ENCODE measurements at regions of chr2 and their contacts with region 1.

Region 1: DNA sequence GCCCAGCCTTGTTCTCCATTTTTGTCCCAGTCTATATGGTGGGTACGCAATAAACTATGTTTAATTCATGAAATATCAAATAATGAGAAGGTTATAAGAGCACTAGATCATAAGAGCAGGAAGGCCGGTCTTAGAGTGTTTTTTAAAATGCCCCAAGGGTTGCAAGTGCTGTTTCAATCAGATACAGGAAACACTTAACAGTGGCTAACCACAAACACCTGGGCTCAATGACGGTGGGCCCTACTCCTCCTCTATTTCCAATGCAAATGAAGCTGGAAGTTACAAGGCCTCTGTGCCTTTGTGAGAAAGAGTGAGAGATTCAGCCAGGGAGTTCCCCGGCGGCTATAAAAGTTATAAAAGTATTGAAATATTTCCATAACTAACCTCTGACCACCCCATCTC is 18.9 kb upstream of the WDR33 start:
- DNase-seq: peak; percentile 91
- H3K4me3 Mint-ChIP-seq: no peak overlapping the region
- H3K27ac Mint-ChIP-seq: peak overlapping the region; percentile 78
- H3K4me1 Mint-ChIP-seq: peaks cover 25% of the 10 kb centered on the region
- H3K27me3 Mint-ChIP-seq: no peaks in the 10 kb centered on the region

Region 2: DNA sequence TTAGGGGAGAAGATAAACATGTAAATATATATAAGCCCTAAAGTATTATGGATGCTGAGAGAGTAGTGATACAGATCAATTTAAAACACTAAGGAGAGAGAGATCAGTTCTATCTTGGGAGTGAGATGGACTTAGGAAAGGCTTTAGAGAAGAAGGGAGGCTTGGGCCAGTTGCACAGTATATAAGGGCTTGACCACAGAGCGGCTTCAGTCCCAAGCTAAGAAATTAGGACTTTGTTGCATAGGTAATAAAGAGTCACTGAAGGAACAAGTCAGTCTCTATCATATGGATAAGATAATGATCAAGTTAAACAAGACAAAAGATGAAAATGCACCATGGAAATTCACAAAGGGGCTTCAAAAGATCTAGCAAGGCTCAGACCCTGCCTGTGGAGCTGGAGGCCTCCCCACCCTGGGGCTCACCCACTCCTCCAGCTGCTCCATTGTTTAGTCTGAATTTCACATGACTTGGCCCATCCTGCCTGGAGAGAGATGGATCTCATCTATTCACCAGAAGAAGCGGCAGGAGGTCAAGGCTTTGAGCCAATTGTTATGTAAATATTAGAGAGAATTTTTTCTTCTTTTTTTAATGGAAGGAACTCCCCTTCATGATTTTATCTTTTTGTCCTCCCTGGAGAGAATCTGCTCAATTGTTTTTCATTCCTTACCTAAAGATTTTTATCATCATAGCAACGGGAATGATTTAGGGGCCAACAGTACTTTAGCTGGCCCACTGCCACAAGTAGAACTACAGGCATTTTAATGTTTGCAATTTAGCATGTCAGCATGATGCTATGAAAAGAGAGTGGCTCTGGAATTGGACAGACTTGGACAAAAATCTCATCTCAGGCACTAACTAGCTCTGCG is 1129.9 kb before region 1 on chr2:
- CTCF ChIA-PET with region 1: no interaction called
- intact Hi-C with region 1: loop called (anchors 10 kb)
- DNase-seq: no peak
- H3K4me3 Mint-ChIP-seq: no peak overlapping the region
- H3K27ac Mint-ChIP-seq: no peak overlapping the region
- H3K4me1 Mint-ChIP-seq: no peaks in the 10 kb centered on the region
- H3K27me3 Mint-ChIP-seq: no peaks in the 10 kb centered on the region

Region 3: GRCh38 chr2:127197475-127198385 is 632.1 kb before region 1 on chr2:
- CTCF ChIA-PET with region 1: no interaction called
- intact Hi-C with region 1: no loop called
- DNase-seq: peak; percentile 80
- H3K4me3 Mint-ChIP-seq: peak overlapping the region; percentile 69
- H3K27ac Mint-ChIP-seq: no peak overlapping the region
- H3K4me1 Mint-ChIP-seq: peaks cover 5% of the 10 kb centered on the region
- H3K27me3 Mint-ChIP-seq: no peaks in the 10 kb centered on the region

Region 4: DNA sequence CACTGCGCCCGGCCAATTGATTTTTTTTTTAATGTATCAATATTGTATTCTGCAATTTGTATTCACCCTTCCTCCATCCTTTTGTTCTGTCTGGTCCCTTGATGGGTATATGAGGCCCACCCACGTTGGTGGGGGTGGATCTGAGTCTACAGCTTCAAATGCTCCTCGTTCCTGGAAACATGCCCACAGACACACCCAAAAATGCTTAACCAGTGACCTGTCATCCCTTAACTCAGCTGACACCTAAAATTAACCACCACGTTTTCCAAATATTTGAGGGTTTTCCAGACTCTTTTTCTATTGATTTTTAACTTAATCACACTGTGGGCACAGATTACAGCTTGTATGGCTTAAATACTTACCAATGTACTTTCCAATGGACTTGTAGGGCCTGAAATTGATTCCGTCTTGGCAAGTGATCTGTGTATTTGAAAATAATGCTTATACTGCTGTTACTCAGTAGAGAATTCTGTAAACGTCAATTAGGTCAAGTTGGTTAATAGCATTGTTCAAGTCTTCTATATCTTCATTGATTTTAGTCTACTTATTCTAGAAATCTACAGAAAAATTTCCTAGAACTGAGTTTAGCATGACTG is 575.4 kb before region 1 on chr2:
- CTCF ChIA-PET with region 1: no interaction called
- intact Hi-C with region 1: no loop called
- DNase-seq: no peak
- H3K4me3 Mint-ChIP-seq: no peak overlapping the region
- H3K27ac Mint-ChIP-seq: no peak overlapping the region
- H3K4me1 Mint-ChIP-seq: no peaks in the 10 kb centered on the region
- H3K27me3 Mint-ChIP-seq: no peaks in the 10 kb centered on the region

Region 5: GRCh38 chr2:127763776-127764175 is 66.1 kb before region 1 on chr2:
- CTCF ChIA-PET with region 1: no interaction called
- intact Hi-C with region 1: no loop called
- DNase-seq: no peak
- H3K4me3 Mint-ChIP-seq: no peak overlapping the region
- H3K27ac Mint-ChIP-seq: no peak overlapping the region
- H3K4me1 Mint-ChIP-seq: peaks cover 6% of the 10 kb centered on the region
- H3K27me3 Mint-ChIP-seq: no peaks in the 10 kb centered on the region

Region 6: DNA sequence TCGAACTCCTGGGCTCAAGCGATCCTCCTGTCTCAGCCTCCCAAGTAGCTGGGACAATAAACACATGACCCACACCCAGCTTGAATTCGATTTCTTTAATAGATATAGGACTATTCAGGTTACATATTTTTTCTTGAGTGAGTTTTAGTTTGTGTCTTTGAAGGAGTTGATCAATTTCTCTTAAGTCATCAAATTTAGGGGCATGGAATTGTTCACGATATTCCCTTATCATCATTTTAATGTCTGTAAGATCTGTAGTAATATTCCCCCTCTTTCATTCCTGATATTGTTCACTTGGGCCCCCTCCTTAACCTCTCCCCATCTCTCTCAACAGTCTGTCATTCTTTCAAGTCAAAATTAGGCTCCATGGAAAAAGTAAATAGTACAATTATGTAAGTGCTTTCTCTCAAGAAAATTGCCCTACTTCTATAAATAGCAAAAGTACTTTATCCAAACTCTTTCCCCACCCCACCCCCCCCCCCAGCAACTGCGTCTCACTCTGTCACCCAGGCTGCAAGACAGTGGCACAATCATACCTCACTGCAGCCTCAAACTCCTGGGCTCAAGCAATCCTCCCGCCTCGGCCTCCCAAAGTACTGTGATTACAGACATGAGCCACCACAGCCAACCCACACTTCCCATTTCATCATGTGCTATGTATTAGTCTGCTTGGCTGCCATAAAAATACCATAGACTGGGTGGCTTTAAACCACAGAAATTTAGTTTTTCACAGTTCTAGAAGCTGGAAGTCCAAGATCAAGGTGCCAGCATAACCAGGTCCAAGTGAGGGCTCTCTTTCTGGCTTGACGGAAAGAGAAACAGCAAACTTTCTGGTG is 38.9 kb before region 1 on chr2:
- CTCF ChIA-PET with region 1: no interaction called
- intact Hi-C with region 1: no loop called
- DNase-seq: no peak
- H3K4me3 Mint-ChIP-seq: no peak overlapping the region
- H3K27ac Mint-ChIP-seq: no peak overlapping the region
- H3K4me1 Mint-ChIP-seq: peaks cover 29% of the 10 kb centered on the region
- H3K27me3 Mint-ChIP-seq: no peaks in the 10 kb centered on the region